B cell (primary cell): ENCODE measurements at regions of chr7 and their contacts with region 1.

Region 1: DNA sequence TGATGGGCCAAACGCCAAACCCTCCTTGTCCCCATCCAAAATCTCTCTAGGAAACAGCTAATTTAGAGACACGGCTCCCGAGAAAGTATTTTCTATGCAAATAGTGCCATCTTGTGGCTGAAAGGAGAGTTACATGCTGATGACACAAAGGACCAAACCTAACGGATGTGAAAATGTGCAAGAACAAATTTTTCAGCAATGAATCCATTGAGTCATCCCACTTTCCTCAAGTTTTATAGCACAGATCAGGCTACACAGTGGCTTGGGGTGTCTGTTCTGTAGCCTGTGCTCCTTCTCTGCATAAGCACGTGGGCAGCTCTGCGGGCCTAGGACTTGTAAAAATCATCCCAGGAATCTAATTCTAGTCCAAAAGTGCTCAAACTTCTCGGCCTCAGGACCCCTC is 154.8 kb upstream of the PRR15 start:
- DNase-seq: peak; percentile 70
- ATAC-seq: peak; percentile 28
- H3K4me3 ChIP-seq: no peak overlapping the region
- H3K4me3 Mint-ChIP-seq: no peak overlapping the region
- H3K27ac ChIP-seq: no peak overlapping the region
- H3K27ac Mint-ChIP-seq: no peak overlapping the region
- H3K4me1 ChIP-seq: no peaks in the 10 kb centered on the region
- H3K4me1 Mint-ChIP-seq: no peaks in the 10 kb centered on the region
- H3K27me3 ChIP-seq: peaks cover 0 to 2% (median 0%) of the 10 kb centered on the region in 4 experiments
- H3K27me3 Mint-ChIP-seq: peaks cover 19% of the 10 kb centered on the region
- CTCF ChIP-seq: peak; percentile 96

Region 2: DNA sequence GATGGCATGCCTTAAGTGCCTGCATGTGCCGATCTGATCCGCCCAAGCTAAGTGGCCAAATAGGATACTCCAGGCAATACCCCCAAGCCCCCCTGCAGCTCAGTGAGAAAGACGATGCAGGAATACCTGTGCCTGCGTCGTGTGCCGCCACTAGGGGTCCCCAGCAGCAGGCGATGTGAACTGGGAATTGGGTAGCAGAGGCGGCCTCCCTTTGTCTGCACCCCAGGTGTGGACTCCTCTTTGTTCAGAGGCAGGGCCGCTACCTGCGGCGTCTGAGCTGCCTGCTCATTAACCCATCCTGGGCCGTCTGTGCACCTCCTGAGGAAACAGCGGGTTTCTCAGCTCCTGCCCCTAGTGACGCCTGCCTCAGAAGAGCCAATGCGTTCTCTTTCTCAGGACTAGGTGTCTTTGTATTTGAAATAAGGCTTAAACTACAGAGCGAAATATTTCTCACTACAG is 219.1 kb before region 1 on chr7:
- CTCF ChIA-PET with region 1: interaction called, 110 read pairs
- POLR2A ChIA-PET with region 1: no interaction called
- intact Hi-C with region 1: loop called (anchors 1 kb)
- DNase-seq: peak; percentile 54
- ATAC-seq: no peak
- H3K4me3 ChIP-seq: no peak overlapping the region
- H3K4me3 Mint-ChIP-seq: no peak overlapping the region
- H3K27ac ChIP-seq: no peak overlapping the region
- H3K27ac Mint-ChIP-seq: no peak overlapping the region
- H3K4me1 ChIP-seq: peaks cover 5 to 7% of the 10 kb centered on the region in 2 donors
- H3K4me1 Mint-ChIP-seq: no peaks in the 10 kb centered on the region
- H3K27me3 ChIP-seq: peaks cover 0 to 14% (median 5%) of the 10 kb centered on the region in 4 experiments
- H3K27me3 Mint-ChIP-seq: peaks cover 35% of the 10 kb centered on the region
- CTCF ChIP-seq: peak; percentile 75

Region 3: DNA sequence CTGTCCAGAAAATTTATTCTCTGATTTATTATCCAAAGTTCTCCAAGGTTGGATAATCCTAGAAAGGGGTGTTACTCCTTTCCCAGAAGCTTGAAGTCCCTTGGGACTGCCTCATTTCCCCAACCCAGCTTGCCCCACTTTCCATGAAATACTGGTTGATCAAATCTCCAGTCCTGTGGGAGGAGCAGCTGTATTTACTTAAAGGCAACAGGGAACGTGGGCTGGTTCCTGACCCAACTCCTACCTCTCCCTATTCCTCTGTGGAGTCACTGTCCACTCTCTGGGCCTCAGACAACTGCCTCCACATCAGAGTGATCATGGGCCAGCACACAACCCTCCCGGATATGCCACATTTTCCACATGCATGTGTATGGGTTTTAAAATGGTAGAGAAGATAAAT is 11.4 kb before region 1 on chr7:
- CTCF ChIA-PET with region 1: interaction called, 13 read pairs
- POLR2A ChIA-PET with region 1: no interaction called
- intact Hi-C with region 1: no loop called
- DNase-seq: no peak
- ATAC-seq: no peak
- H3K4me3 ChIP-seq: no peak overlapping the region
- H3K4me3 Mint-ChIP-seq: no peak overlapping the region
- H3K27ac ChIP-seq: no peak overlapping the region
- H3K27ac Mint-ChIP-seq: no peak overlapping the region
- H3K4me1 ChIP-seq: no peaks in the 10 kb centered on the region
- H3K4me1 Mint-ChIP-seq: no peaks in the 10 kb centered on the region
- H3K27me3 ChIP-seq: no peaks in the 10 kb centered on the region
- H3K27me3 Mint-ChIP-seq: peaks cover 4% of the 10 kb centered on the region
- CTCF ChIP-seq: no peak